ENCODE measurements at regions of chr17 and their contacts with region 1.

Region 1: DNA sequence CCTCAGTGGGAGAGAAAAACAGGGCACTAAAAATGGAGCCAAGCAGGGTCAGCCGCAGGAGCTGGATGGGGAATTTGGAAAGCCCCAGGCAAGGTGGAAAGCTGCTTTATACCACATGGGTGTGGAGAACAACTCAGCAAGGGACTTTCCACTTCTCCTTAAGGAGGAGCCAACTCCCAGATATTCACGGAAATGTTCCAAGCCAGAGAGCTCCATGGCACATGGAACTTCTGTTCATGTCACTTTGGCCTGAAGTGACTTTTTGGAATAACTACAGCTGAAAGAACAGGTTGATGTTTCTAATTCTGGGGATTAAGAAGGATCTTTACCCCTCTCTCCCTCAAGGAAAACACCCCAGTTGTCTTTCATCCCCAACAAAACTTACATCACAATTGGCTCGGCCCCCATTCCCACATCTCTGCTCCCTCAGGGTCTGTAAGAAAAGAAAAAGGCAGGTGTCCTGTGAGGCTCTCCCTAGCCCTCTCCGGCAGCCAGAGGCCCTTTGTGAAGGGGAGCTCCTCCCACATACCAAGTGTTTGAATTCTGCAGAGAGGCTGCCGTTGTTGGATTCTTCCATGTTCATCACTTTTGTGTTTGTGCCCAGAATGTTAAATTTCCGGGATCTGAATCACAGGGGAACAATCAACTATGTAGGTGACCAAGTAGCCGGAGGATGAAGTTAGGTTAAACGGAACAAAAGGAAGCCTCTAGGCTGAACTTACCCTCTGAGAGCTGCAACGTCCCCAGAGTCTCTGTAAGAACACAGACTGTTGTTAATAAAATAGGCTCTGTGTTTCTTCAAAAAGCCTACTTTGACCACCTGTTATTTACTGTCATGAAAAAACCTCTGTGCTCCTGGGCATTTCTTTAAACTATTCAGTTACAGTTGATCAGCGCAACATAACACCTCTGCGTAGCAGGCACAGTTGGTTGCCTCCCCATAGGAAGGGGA is 41.0 kb downstream of the STAT5A start:
- DNase-seq: peak; percentile 52
- H3K4me3 ChIP-seq: no peak overlapping the region
- H3K27me3 ChIP-seq: no peaks in the 10 kb centered on the region
- CTCF ChIP-seq: no peak

Region 2: DNA sequence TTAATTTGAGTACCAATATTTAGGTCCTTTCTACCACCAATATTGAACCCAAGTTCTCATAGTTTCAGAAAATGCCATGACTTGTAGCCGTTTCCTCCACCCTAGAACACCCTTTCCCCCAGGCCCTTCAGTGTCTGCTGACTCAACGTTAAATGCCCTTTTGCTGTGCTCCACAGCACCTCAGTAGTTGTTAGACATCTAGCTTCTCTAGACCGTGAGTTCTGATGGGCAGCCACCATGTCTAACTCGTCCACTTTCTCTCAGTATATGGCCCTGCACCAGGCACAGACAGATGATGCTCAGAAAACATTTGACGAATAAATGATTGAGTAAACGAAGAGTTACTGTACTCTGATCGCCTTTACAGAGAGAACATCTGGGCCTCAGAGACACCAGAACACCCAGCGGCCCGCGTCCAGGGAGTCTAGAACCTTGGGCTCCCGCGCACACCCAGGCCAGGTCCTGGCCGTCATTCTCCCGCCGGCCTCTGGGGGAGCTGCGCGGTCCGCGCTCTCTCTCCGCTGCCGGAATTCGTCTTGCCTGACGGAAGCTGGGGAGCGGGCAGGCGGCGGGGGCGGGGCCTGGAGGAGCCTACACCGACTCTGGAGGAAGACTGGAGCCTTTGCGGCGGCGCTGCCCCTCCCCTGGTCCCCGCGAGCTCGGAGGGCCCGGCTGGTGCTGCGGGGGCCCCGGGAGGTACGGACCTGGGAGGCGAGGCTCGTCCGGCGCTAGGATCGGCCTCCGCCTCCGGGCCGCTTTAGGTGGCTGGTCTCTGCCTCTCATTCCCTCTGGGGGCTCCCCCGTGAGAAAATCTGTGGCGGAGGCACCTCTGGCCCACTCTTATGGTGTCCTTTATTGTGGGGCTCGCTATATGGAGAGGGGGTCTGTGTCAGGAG is 309.5 kb before region 1 on chr17 and contains the start of gene NKIRAS2:
- CTCF ChIA-PET with region 1: no interaction called
- POLR2A ChIA-PET with region 1: no interaction called
- DNase-seq: peak; percentile 34
- H3K4me3 ChIP-seq: peak within 1 kb of the TSS; percentile 76
- H3K27me3 ChIP-seq: no peaks in the 10 kb centered on the region
- CTCF ChIP-seq: peak; percentile 92
- polyA plus RNA-seq, gene NKIRAS2: 55.9 and 81.4 TPM in 2 replicates

Region 3: GRCh38 chr17:42276359-42276608 is 53.0 kb before region 1 on chr17 and contains the start of gene STAT5B:
- CTCF ChIA-PET with region 1: no interaction called
- POLR2A ChIA-PET with region 1: interaction called, 18 read pairs
- DNase-seq: no peak
- H3K4me3 ChIP-seq: peak within 1 kb of the TSS; percentile 85
- H3K27me3 ChIP-seq: no peaks in the 10 kb centered on the region
- CTCF ChIP-seq: no peak
- polyA plus RNA-seq, gene STAT5B: 29.8 and 37.2 TPM in 2 replicates

Region 4: DNA sequence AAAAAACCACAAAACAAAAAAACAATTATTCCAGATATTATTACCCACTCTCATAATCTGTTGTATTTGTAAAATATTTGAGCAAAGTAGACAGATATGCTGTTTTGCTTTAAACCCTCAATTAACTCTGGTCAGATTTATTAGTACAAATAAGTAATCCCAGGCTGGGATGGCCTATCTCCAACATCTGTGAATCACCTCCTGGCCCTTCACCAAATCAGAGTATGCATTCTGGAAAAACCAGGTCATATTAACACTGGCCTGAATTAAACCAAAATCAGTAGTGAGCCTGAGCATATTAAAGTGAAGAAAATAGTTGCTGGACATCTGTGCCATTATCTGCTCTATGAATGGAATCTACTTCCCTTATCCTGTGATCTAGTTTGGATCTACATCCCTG is 17.9 kb after region 1 on chr17:
- CTCF ChIA-PET with region 1: no interaction called
- POLR2A ChIA-PET with region 1: no interaction called
- DNase-seq: peak; percentile 79
- H3K4me3 ChIP-seq: no peak overlapping the region
- H3K27me3 ChIP-seq: no peaks in the 10 kb centered on the region
- CTCF ChIP-seq: no peak

Measured in BJ (cell line).